Activated CD8-positive, alpha-beta memory T cell treated with anti-CD3 and anti-CD28 coated beads, Interleukin-2, amount 10 ng/mL, durations not matched to agents 7 days and 5 days (primary cell): ENCODE measurements at regions of chr13 and their contacts with region 1.

Region 1: DNA sequence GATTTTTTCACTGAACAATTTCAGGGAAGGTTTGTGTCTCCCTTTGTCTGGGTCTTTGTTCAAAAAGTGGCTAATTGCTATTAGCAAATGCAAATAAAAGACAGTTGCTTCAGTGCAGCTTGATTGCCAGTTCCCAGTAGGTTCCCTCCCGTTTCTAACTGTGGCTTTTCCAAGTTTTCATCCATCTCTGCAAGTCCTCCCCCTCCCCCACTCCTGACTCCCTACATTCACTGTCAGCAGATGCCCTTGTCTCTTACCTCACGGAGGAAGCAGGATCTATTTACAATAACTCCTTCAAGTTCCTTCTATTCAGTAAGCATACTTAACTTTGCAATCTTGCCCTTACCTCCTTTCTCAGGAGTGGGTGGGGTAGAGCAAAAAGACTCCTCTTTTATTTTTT is 55.4 kb upstream of the SCEL start:
- DNase-seq: no peak
- ATAC-seq: no peak
- H3K4me3 Mint-ChIP-seq: no peak overlapping the region
- H3K27ac Mint-ChIP-seq: no peak overlapping the region
- H3K4me1 Mint-ChIP-seq: peaks cover 16% of the 10 kb centered on the region
- H3K27me3 Mint-ChIP-seq: peaks cover 6% of the 10 kb centered on the region

Region 2: DNA sequence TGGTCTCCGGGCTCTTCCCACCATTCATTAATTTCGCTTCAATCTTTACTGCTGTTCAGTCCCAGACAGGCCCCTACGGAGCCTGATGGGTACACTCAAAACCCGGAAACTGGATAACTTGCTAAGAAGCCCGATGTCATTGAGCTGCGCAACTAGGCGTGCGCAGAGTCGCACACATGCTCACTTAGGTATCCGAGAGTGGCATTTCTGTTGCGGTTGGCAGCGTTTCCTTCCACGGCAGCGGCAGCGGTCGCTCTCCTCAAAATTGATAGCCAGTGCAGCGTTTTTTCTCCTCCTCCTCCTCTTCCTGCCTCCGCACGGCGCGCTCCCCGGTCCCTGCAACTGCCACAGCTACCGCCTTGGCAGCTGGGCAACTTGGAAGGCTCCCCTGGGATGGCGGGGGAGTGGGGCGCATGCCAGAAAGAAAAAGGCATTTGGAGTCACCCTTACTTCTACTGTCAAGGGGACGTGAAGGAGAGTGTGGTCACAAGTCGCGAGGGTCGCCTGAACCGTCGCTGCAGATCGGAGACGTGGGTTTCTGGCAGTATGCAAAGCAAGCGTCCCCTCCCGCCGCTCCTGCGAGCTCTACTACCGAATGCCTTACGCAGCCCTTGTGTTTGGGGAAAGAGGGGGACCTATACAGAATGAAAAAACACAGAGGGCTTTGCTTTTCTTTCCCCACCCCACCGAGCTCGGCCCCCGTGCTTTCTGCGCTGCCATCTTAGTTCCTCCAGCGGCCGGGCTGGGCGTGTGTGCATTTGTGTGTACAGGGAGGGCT is 150.7 kb before region 1 on chr13:
- CTCF ChIA-PET with region 1: interaction called, 30 read pairs
- DNase-seq: peak; percentile 97
- ATAC-seq: peak; percentile 75
- H3K4me3 Mint-ChIP-seq: peak overlapping the region; percentile 81
- H3K27ac Mint-ChIP-seq: peak overlapping the region; percentile 95
- H3K4me1 Mint-ChIP-seq: peaks cover 39% of the 10 kb centered on the region
- H3K27me3 Mint-ChIP-seq: peaks cover 3% of the 10 kb centered on the region

Region 3: GRCh38 chr13:77492982-77493381 is 12.9 kb after region 1 on chr13:
- CTCF ChIA-PET with region 1: interaction called, 10 read pairs
- DNase-seq: no peak
- ATAC-seq: peak; percentile 30
- H3K4me3 Mint-ChIP-seq: no peak overlapping the region
- H3K27ac Mint-ChIP-seq: no peak overlapping the region
- H3K4me1 Mint-ChIP-seq: peaks cover 7% of the 10 kb centered on the region
- H3K27me3 Mint-ChIP-seq: no peaks in the 10 kb centered on the region

Region 4: DNA sequence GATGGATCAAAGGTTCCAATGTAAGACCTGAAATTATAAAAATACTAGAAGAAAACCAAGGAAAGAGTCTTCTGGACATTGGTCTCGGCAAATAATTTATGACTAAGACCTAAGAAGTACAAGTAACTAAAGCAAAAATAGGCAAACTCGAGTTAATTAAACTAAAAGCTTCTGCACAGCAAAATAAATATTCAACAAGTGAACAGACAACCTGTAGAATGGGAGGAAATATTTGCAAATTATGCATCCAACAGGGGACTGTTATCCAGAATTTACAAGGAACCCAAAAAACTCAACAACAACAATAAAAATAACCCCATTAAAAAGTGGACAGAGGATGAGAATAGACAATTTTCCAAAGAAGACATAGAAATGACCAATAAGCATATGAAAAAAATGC is 207.7 kb after region 1 on chr13:
- CTCF ChIA-PET with region 1: no interaction called
- DNase-seq: no peak
- ATAC-seq: no peak
- H3K4me3 Mint-ChIP-seq: no peak overlapping the region
- H3K27ac Mint-ChIP-seq: no peak overlapping the region
- H3K4me1 Mint-ChIP-seq: peaks cover 1% of the 10 kb centered on the region
- H3K27me3 Mint-ChIP-seq: peaks cover 20% of the 10 kb centered on the region